Activated CD4-positive, alpha-beta T cell treated with anti-CD3 and anti-CD28 coated beads for 36 hours (primary cell): ENCODE measurements at regions of chr1 and their contacts with region 1.

Region 1: GRCh38 chr1:212234431-212235395 is 50.5 kb upstream of the PPP2R5A start:
- DNase-seq: peak; percentile 61
- ATAC-seq: peak; percentile 95
- H3K4me3 Mint-ChIP-seq: no peak overlapping the region
- H3K27ac Mint-ChIP-seq: peak overlapping the region; percentile 39
- H3K4me1 Mint-ChIP-seq: peaks cover 35% of the 10 kb centered on the region
- H3K27me3 Mint-ChIP-seq: no peaks in the 10 kb centered on the region

Region 2: DNA sequence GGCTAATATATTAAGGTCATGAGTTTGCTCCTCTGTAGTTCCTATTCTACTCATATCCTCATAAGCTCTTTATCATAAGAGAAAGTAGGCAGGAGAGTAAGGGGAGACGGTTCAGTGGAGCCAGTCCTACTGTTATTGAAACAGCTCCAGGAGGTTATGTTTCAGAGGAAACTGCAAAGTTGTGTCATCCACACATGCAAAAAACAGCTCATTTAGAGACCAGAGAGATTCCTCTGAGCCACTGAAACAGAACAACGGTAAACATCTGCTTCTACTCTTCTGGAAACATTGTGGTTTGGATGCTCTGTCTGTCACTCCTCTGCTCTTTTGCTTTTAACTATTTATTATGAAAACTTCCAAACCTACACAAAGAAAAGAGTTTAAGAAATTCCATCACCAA is 15.8 kb before region 1 on chr1:
- CTCF ChIA-PET with region 1: interaction called, 3 read pairs
- POLR2A ChIA-PET with region 1: interaction called, 5 read pairs
- intact Hi-C with region 1: loop called (anchors 1 to 2 kb)
- DNase-seq: peak; percentile 36
- ATAC-seq: peak; percentile 97
- H3K4me3 Mint-ChIP-seq: no peak overlapping the region
- H3K27ac Mint-ChIP-seq: no peak overlapping the region
- H3K4me1 Mint-ChIP-seq: peaks cover 22% of the 10 kb centered on the region
- H3K27me3 Mint-ChIP-seq: no peaks in the 10 kb centered on the region